Uterus (tissue), 4 donors: ENCODE measurements at regions of chr3 and their contacts with region 1.

Region 1: GRCh38 chr3:57100046-57100695 is 39.7 kb downstream of the SPATA12 start:
- DNase-seq: peak; percentile 72 to 83
- H3K4me3 ChIP-seq: no peak overlapping the region
- H3K27ac ChIP-seq: peak overlapping the region; percentile 29 to 36
- H3K4me1 ChIP-seq: no peaks in the 10 kb centered on the region
- H3K27me3 ChIP-seq: no peaks in the 10 kb centered on the region
- CTCF ChIP-seq: peak; percentile 84 to 93 (median 90)
- POLR2A ChIP-seq: no peak

Region 2: GRCh38 chr3:56894881-56895431 is 205.2 kb before region 1 on chr3:
- intact Hi-C with region 1: no loop called
- DNase-seq: peak in 1 of 2 donors; percentile 26
- H3K4me3 ChIP-seq: no peak overlapping the region
- H3K27ac ChIP-seq: peak overlapping the region in 1 of 2 donors; percentile 17
- H3K4me1 ChIP-seq: no peaks in the 10 kb centered on the region
- H3K27me3 ChIP-seq: no peaks in the 10 kb centered on the region
- CTCF ChIP-seq: no peak
- POLR2A ChIP-seq: no peak

Region 3: DNA sequence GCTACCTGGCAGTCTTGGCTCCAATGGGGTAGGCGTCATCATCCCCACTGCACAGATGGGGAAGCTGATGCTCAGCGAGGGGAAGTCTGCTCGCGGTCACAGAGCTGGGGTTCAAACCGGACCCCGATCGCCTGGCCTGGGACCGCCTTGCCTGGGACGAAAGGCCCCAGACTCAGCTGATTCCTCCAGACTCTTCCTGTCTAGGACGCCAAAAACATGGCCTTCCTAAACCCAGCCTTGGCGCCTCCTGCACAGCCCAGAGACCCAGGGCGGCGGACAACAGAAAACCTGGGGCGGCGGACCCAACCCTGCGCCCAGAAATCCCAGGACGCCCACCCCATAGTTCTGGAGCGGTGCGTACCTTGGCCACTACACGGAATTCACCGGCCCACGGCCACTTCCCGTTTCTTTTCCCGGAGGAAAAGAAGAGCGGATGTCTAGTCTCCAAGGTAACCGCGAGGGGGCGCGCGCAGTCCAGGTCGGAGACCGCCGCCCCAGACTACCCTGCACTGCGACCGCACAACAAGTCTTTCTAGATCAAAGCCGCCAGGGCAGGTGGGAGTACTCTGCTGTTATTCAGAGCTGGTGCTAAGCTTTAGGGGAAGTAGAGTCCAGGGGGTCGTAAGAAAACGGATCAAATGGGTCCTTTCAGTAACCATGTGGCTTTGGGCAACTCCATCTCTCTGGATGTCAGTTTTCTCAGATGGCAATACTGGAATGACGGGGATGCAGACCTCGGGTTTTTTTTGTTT is 69.9 kb after region 1 on chr3:
- intact Hi-C with region 1: loop called (anchors 10 kb)
- DNase-seq: peak; percentile 73 to 77
- H3K4me3 ChIP-seq: peak overlapping the region; percentile 22 to 40
- H3K27ac ChIP-seq: no peak overlapping the region
- H3K4me1 ChIP-seq: no peaks in the 10 kb centered on the region
- H3K27me3 ChIP-seq: no peaks in the 10 kb centered on the region
- CTCF ChIP-seq: peak; percentile 83 to 90 (median 88)
- POLR2A ChIP-seq: no peak

Region 4: DNA sequence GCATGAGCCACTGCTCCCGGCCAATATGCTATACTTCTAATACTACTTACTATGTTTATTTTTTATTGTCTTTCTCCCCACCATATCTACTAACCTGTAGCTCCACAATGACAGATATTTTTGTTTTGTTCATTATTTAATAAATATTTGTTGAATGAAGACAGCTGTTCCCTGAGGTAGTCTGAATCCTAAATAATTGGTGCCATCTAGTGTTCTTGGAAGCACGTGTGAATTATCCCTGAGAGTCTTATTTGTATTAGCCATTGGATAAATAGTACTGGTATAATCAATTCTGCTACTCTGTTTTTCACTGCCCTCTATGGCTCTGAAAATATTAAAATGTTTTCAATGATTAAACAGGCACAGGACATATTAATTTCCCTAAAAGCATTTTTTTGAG is 121.7 kb after region 1 on chr3:
- intact Hi-C with region 1: loop called (anchors 5 kb)
- DNase-seq: no peak
- H3K4me3 ChIP-seq: no peak overlapping the region
- H3K27ac ChIP-seq: no peak overlapping the region
- H3K4me1 ChIP-seq: no peaks in the 10 kb centered on the region
- H3K27me3 ChIP-seq: no peaks in the 10 kb centered on the region
- CTCF ChIP-seq: peak; percentile 34 to 51 (median 40)
- POLR2A ChIP-seq: no peak

Region 5: GRCh38 chr3:57852896-57853295 is 752.7 kb after region 1 on chr3:
- intact Hi-C with region 1: no loop called
- DNase-seq: no peak
- H3K4me3 ChIP-seq: no peak overlapping the region
- H3K27ac ChIP-seq: no peak overlapping the region
- H3K4me1 ChIP-seq: no peaks in the 10 kb centered on the region
- H3K27me3 ChIP-seq: no peaks in the 10 kb centered on the region
- CTCF ChIP-seq: peak; percentile 21 to 40 (median 26)
- POLR2A ChIP-seq: no peak